Activated CD4-positive, alpha-beta T cell treated with anti-CD3 and anti-CD28 coated beads for 36 hours (primary cell): ENCODE measurements at regions of chr10 and their contacts with region 1.

Region 1: DNA sequence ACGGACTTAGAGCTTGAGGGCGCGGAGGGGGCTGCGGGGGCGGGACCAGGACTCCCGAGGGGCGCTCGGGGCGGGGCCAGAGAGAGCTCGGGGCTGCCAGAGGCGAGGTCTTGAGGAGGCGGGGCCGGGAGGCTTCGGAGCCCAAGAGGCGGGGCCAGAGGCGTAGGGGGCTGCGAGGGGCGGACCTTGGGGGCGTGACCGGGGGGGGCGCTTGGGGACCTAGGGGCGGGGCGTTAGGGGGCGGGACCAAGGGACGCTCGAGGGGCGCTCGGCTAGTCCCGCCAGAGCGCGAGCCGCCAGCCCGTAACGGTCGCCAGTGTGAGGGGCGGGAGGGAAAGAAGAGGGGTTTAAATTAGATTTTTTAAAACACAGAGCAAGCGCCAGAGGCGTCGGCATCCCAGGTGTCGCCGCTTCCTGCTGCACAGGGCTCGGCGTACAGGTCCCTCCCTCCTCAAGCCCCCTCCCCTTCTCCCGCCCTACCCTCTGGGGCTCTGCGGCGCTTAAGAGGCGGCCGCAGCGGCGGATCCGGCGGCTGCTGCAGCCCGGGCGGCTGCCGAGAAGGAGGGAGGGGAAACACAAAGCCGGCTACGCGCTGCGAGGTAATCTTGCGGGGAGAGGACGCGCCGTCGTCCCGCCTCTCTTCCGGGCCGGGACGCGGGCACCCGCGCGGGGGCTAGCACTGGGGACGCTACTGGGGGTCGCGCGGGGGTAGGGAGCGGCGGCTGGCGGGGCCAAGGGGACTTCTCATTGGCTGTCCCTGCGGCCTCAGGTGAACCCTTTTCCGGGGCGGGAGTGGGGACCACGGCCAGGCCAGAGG is at the start of gene ADD3:
- DNase-seq: peak; percentile 94
- ATAC-seq: peak; percentile 65
- H3K4me3 Mint-ChIP-seq: no peak within 1 kb of the TSS
- H3K27ac Mint-ChIP-seq: peak within 1 kb of the TSS; percentile 94
- H3K4me1 Mint-ChIP-seq: peaks cover 49% of the 10 kb centered on the region
- H3K27me3 Mint-ChIP-seq: no peaks in the 10 kb centered on the region
- total RNA-seq, gene ADD3: 72.5 to 101 TPM

Region 2: GRCh38 chr10:109883859-109884771 is 123.8 kb before region 1 on chr10:
- CTCF ChIA-PET with region 1: interaction called, 8 read pairs
- POLR2A ChIA-PET with region 1: no interaction called
- intact Hi-C with region 1: loop called in 1 of 2 experiments (anchors 2 kb)
- DNase-seq: peak; percentile 73
- ATAC-seq: peak; percentile 71
- H3K4me3 Mint-ChIP-seq: no peak overlapping the region
- H3K27ac Mint-ChIP-seq: no peak overlapping the region
- H3K4me1 Mint-ChIP-seq: peaks cover 10% of the 10 kb centered on the region
- H3K27me3 Mint-ChIP-seq: no peaks in the 10 kb centered on the region

Region 3: GRCh38 chr10:110035070-110035921 is 27.4 kb after region 1 on chr10:
- CTCF ChIA-PET with region 1: interaction called, 5 read pairs
- POLR2A ChIA-PET with region 1: no interaction called
- intact Hi-C with region 1: loop called in 1 of 2 experiments (anchors 2 kb)
- DNase-seq: peak; percentile 51
- ATAC-seq: peak; percentile 76
- H3K4me3 Mint-ChIP-seq: no peak overlapping the region
- H3K27ac Mint-ChIP-seq: peak overlapping the region; percentile 67
- H3K4me1 Mint-ChIP-seq: peaks cover 80% of the 10 kb centered on the region
- H3K27me3 Mint-ChIP-seq: no peaks in the 10 kb centered on the region

Region 4: DNA sequence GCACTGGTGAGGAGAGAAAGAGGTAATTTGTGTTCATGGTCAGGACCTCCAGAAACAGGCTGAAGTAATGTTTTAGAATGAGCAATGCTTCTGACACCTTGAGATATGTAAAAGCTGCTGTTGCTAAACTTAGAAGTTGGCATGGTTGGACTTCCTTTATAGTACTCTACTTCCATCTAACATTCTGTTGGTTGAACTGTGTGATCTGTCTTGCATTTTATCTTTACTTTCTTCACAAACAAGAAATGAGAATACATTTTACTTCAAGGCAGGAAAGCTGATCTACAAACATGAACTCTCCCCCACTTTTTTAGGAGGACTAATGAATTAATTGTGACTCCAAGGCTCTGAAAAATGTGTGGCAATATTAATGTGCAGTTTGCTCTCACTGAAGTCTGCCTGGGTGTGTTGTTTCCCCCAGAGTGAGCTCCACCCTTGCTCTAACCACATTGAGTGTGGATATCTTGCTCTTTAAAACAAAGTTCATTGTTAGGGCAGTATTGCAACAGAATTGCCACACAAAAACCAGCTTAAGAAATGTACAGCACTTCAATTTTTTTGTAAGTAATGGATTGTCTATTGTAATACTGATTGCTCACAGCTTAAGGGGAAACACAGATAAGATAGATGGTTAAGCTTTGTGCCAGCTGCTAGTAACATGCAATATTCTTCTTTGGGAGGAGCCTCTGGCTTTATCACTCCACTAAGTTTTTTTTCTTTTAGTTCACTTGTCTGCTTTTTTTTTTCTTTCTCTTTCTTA is 68.8 kb after region 1 on chr10:
- CTCF ChIA-PET with region 1: interaction called, 13 read pairs
- POLR2A ChIA-PET with region 1: interaction called, 5 read pairs
- intact Hi-C with region 1: loop called in 1 of 2 experiments (anchors 1 kb)
- DNase-seq: no peak
- ATAC-seq: peak; percentile 45
- H3K4me3 Mint-ChIP-seq: peak overlapping the region; percentile 75
- H3K27ac Mint-ChIP-seq: peak overlapping the region; percentile 98
- H3K4me1 Mint-ChIP-seq: peaks cover 85% of the 10 kb centered on the region
- H3K27me3 Mint-ChIP-seq: no peaks in the 10 kb centered on the region

Region 5: DNA sequence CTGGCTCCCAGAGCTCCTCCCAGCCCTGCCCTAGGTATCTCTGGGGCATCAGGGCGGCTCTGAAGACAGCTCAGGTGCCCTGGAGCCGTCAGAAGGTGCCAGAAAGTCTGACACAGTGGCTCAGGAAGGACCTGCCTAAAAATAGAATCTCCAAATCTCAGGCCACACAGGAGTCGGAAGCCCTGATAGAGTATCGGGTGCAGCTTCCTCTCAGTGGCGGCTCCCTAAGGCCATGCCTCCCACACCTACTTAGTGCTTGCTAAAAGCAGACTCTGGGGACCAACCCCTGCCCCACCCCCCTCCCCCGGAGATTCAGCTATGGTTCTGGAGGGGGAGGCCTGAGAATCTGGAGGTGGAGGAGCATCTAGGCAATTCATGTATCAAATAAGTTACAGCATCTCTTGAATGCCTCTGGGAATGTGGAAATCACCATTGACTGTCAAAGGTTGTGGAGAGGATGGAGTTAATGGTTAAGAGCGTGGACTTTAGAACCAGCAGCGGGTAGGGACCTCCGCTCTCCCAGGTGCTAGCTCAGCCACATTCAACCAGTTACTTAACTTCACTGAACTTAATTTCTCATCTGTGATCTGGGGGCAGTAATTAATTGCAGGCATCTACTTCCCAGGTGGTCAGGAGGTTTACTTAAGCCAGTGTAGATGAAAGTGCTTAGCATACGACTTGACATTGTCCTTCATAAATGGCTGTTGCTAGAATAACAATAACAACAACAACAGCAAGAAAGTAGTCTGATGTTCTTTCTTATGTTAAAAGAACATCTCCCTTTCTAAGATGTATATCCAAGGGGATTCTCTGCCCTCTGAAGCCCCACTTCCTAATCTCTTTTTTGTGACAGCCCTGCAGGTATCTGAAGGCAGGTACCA is 160.9 kb after region 1 on chr10:
- CTCF ChIA-PET with region 1: no interaction called
- POLR2A ChIA-PET with region 1: no interaction called
- intact Hi-C with region 1: no loop called
- DNase-seq: peak; percentile 34
- ATAC-seq: peak; percentile 74
- H3K4me3 Mint-ChIP-seq: no peak overlapping the region
- H3K27ac Mint-ChIP-seq: no peak overlapping the region
- H3K4me1 Mint-ChIP-seq: peaks cover 26% of the 10 kb centered on the region
- H3K27me3 Mint-ChIP-seq: peaks cover 63% of the 10 kb centered on the region

Region 6: GRCh38 chr10:110225756-110226542 is 218.0 kb after region 1 on chr10:
- CTCF ChIA-PET with region 1: no interaction called
- POLR2A ChIA-PET with region 1: no interaction called
- intact Hi-C with region 1: loop called (anchors 1 to 5 kb)
- DNase-seq: peak; percentile 94
- ATAC-seq: peak; percentile 48
- H3K4me3 Mint-ChIP-seq: peak overlapping the region; percentile 95
- H3K27ac Mint-ChIP-seq: peak overlapping the region; percentile 95
- H3K4me1 Mint-ChIP-seq: peaks cover 44% of the 10 kb centered on the region
- H3K27me3 Mint-ChIP-seq: no peaks in the 10 kb centered on the region

Region 7: GRCh38 chr10:110918643-110919363 is 910.9 kb after region 1 on chr10 and contains the start of gene BBIP1:
- CTCF ChIA-PET with region 1: no interaction called
- POLR2A ChIA-PET with region 1: no interaction called
- intact Hi-C with region 1: loop called in 1 of 2 experiments (anchors 1 kb)
- DNase-seq: no peak
- ATAC-seq: peak; percentile 93
- H3K4me3 Mint-ChIP-seq: peak within 1 kb of the TSS; percentile 96
- H3K27ac Mint-ChIP-seq: peak within 1 kb of the TSS; percentile 98
- H3K4me1 Mint-ChIP-seq: peaks cover 41% of the 10 kb centered on the region
- H3K27me3 Mint-ChIP-seq: no peaks in the 10 kb centered on the region
- total RNA-seq, gene BBIP1: 34.3 to 48.8 TPM